HEK293 (cell line): ENCODE measurements at regions of chr17 and their contacts with region 1.

Region 1: GRCh38 chr17:29369831-29370735 is 20.1 kb upstream of the TAOK1 start:
- H3K4me3 ChIP-seq: peak overlapping the region; percentile 21
- H3K27ac ChIP-seq: 0 out of 2 replicates have a peak overlapping the region, but pooled peaks have one; percentile 4
- H3K4me1 ChIP-seq: no peaks in the 10 kb centered on the region
- CTCF ChIP-seq: peak; percentile 75; the same call in 1 of the 2 replicates

Region 2: GRCh38 chr17:29124117-29124924 is 245.8 kb before region 1 on chr17:
- CTCF ChIA-PET with region 1: interaction called, 10 read pairs
- POLR2A ChIA-PET with region 1: no interaction called
- H3K4me3 ChIP-seq: no peak overlapping the region
- H3K27ac ChIP-seq: no peak overlapping the region
- H3K4me1 ChIP-seq: no peaks in the 10 kb centered on the region
- CTCF ChIP-seq: peak; percentile 69

Region 3: DNA sequence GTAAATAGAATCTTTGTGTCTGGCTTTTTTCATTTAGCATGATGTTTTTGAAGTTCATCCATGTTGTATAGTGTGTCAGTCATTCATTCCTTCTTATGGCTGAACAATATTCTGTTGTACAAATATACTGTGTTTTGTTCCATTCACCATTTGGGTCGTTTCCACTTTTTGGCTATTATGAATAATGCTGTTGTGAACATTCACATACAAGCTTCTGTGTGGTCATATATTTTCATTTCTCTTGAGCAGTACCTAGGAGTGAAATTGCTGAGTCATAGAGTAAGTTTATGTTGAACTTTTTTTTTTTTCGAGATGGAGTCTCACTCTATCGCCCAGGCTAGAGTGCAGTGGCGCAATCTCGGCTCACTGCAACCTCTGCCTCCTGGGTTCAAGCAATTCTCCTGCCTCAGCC is 12.3 kb before region 1 on chr17:
- CTCF ChIA-PET with region 1: interaction called, 32 read pairs
- POLR2A ChIA-PET with region 1: no interaction called
- H3K4me3 ChIP-seq: no peak overlapping the region
- H3K27ac ChIP-seq: no peak overlapping the region
- H3K4me1 ChIP-seq: no peaks in the 10 kb centered on the region
- CTCF ChIP-seq: no peak

Region 4: DNA sequence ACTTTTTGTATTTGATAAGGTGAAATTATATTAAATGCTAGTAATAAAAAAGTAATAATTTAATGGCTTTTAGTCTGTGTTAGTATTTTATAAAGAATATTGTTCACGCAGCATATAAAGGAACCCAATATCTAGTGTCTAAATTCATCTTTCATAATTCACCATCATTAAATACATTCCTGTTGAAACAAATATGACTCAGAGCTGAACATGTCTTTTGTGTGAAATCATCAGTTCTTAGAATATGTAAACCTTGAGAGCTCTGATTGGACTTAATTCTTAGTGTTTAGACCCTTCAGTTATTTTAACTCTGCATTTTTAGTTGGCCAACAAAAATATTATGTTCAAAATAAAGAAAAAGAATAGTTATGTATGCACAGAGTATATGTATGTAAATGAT is 124.9 kb after region 1 on chr17:
- CTCF ChIA-PET with region 1: interaction called, 14 read pairs
- POLR2A ChIA-PET with region 1: no interaction called
- H3K4me3 ChIP-seq: no peak overlapping the region
- H3K27ac ChIP-seq: no peak overlapping the region
- H3K4me1 ChIP-seq: no peaks in the 10 kb centered on the region
- CTCF ChIP-seq: no peak

Region 5: GRCh38 chr17:29549177-29549923 is 179.3 kb after region 1 on chr17:
- CTCF ChIA-PET with region 1: interaction called, 25 read pairs
- POLR2A ChIA-PET with region 1: no interaction called
- H3K4me3 ChIP-seq: no peak overlapping the region
- H3K27ac ChIP-seq: no peak overlapping the region
- H3K4me1 ChIP-seq: peaks cover 13% of the 10 kb centered on the region
- CTCF ChIP-seq: no peak

Region 6: GRCh38 chr17:29579866-29580771 is 210.0 kb after region 1 on chr17:
- CTCF ChIA-PET with region 1: interaction called, 14 read pairs
- POLR2A ChIA-PET with region 1: no interaction called
- H3K4me3 ChIP-seq: no peak overlapping the region
- H3K27ac ChIP-seq: no peak overlapping the region
- H3K4me1 ChIP-seq: no peaks in the 10 kb centered on the region
- CTCF ChIP-seq: peak; percentile 97